HepG2 (cell line): ENCODE measurements at regions of chr16 and their contacts with region 1.

Region 1: DNA sequence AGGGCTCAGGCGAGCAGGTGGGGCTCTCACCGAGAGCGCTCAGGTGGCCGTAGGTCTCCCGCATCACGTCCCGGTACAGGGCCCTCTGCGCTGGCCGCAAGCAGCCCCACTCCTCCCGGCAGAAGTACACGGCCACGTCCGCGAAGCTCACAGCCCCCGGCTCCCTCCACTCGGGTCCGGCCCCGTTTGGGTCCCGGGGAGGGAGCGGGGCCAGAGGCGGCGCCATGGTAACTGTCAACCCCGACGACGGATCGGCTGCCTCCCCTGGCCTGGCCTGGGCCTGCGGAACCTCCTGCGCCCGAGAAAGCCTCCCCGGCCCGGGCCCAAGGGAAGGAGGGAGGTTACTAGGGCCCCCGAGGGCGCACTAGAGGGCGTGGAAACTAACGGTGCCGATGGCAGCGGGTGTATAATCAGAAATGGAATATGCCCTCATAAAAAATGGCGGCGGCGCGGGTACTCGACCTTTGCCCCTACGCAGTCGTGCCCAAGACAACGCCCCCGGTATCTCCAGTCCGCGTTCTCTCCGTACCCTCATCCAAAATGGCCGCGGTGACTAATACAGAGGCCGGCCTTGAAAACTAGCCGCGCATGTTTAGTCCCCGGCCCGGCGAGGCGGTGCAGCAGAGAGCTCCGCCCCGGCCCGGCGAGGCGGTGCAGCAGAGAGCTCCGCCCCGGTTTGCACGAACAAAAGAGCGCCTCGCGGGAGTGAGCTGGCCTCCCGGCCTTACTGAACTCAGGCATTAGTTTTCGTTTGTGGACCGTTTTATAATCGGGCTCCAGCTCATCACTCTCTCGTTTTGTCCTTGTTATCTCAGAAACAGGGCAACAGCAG is at the start of gene ZNF764:
- DNase-seq: peak; percentile 99
- ATAC-seq: peak; percentile 95
- H3K4me3 ChIP-seq: peak within 1 kb of the TSS; percentile 73 to 82 (median 82)
- H3K27ac ChIP-seq: peak within 1 kb of the TSS; percentile 95
- H3K4me1 ChIP-seq: peaks cover 40% of the 10 kb centered on the region
- H3K27me3 ChIP-seq: no peaks in the 10 kb centered on the region
- CTCF ChIP-seq: no peak; the same call in none of the 2 replicates
- EP300 ChIP-seq: peak in 1 of 2 experiments; percentile 38; a peak in 2 of 4 replicates
- POLR2A ChIP-seq: peak; percentile 80 to 90
- RAD21 ChIP-seq: peak; percentile 47
- total RNA-seq, gene ZNF764: 7.3 and 9.1 TPM in 2 replicates

Region 2: DNA sequence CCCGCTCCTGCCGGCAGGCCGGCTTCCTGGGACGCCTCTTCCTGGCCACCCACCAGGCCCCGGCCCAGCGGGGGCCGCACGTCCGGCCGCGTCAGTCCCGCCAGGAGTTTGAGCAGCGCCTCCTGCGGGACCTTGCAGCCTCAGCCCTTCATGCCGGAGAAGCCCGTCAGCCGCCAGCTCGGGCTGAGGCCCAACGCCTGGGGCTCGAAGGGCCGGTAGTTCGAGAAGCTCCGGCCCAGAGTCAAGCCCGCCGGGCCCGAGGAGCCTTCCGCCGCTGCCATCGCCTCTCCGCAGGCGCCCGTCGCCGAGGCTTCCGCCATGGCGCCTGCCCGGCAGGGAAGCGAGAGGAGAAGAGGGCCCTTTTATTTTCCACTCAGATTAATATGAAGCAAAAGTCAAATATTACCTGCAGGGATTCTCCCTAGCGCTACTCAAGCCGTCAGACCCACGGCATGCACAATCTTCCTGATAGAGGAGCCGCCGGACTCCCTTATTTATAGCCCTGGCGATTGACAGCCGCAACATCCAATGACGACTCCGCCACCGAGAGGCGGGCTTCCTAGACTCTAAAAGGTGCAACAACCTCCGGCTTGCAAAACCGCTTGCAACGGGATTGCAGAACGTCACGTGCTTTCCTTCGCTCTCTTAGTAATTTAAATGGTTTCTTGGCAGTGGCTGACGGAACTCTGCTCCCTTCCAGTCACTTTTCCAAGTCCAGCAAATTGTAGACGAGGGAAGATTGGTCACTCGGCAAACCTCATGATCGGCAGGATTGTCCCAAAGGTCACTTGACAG is 112.6 kb before region 1 on chr16 and contains the start of gene SEPHS2:
- CTCF ChIA-PET with region 1: no interaction called
- POLR2A ChIA-PET with region 1: interaction called, 10 read pairs
- in situ Hi-C with region 1: no loop called
- intact Hi-C with region 1: no loop called
- DNase-seq: peak; percentile 97
- ATAC-seq: peak; percentile 52
- H3K4me3 ChIP-seq: peak within 1 kb of the TSS; percentile 86 to 92 (median 91)
- H3K27ac ChIP-seq: peak within 1 kb of the TSS; percentile 95
- H3K4me1 ChIP-seq: peaks cover 94% of the 10 kb centered on the region
- H3K27me3 ChIP-seq: no peaks in the 10 kb centered on the region; a peak in 1 of 5 replicates
- CTCF ChIP-seq: peak; percentile 55
- EP300 ChIP-seq: peak in 1 of 2 experiments; percentile 41; a peak in 1 of 4 replicates
- POLR2A ChIP-seq: peak; percentile 92 to 100
- RAD21 ChIP-seq: peak; percentile 46
- total RNA-seq, gene SEPHS2: 20.7 and 56.3 TPM in 2 replicates

Region 3: DNA sequence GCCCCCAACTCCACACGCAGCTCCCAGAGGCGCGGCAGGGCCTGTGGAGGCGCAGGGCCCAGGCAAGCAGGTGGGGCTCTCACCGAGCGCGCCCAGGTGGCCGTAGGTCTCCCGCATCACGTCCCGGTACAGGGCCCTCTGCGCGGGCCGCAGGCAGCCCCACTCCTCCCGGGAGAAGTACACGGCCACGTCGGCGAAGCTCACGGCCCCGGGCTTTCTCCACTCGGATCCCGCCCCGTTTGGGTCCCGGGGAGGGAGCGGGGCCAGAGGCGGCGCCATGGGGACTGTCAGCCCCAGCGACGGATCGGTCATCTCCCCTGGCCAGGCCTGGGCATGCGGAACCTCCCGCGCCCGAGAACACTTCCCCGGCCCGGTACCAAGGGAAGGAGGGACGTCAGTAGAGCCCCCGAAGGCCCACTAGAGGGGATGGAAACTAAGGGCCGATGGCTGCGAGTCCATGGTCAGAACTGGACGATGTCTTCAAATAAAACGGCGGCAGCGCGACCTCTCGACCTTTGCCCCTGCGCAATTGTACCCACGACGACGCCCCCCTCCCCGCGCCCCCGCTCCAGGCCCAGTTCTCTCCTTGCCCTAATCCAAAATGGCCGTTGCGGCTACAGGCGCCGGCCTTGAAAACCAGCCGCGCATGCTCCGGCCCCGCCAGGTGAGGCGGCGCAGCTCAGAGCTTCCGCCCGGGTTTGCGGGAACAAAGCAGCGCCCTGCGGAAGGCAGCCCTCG is 23.6 kb before region 1 on chr16 and contains the start of gene ZNF747:
- CTCF ChIA-PET with region 1: interaction called, 3 read pairs
- POLR2A ChIA-PET with region 1: interaction called, 187 read pairs
- in situ Hi-C with region 1: no loop called
- intact Hi-C with region 1: loop called (anchors 2 kb)
- DNase-seq: peak; percentile 92
- ATAC-seq: peak; percentile 84
- H3K4me3 ChIP-seq: peak within 1 kb of the TSS; percentile 75 to 93 (median 81)
- H3K27ac ChIP-seq: peak within 1 kb of the TSS; percentile 85
- H3K4me1 ChIP-seq: peaks cover 68% of the 10 kb centered on the region
- H3K27me3 ChIP-seq: no peaks in the 10 kb centered on the region; a peak in 1 of 5 replicates
- CTCF ChIP-seq: peak; percentile 47
- EP300 ChIP-seq: peak; percentile 22 to 47; a peak in 2 of 4 replicates
- POLR2A ChIP-seq: peak; percentile 72 to 87
- RAD21 ChIP-seq: no peak; the same call in none of the 2 replicates
- total RNA-seq, gene ZNF747: 8.8 and 10.2 TPM in 2 replicates

Region 4: GRCh38 chr16:30571695-30572600 is 13.8 kb after region 1 on chr16 and contains the start of gene ZNF688:
- CTCF ChIA-PET with region 1: no interaction called
- POLR2A ChIA-PET with region 1: interaction called, 73 read pairs
- in situ Hi-C with region 1: no loop called
- intact Hi-C with region 1: loop called (anchors 1 kb)
- DNase-seq: peak; percentile 93
- ATAC-seq: peak; percentile 89
- H3K4me3 ChIP-seq: peak within 1 kb of the TSS; percentile 89 to 97 (median 93)
- H3K27ac ChIP-seq: peak within 1 kb of the TSS; percentile 89
- H3K4me1 ChIP-seq: peaks cover 71% of the 10 kb centered on the region
- H3K27me3 ChIP-seq: no peaks in the 10 kb centered on the region
- CTCF ChIP-seq: no peak
- EP300 ChIP-seq: no peak
- POLR2A ChIP-seq: peak; percentile 52 to 74
- RAD21 ChIP-seq: no peak; the same call in 1 of the 2 replicates
- total RNA-seq, gene ZNF688: 5.4 and 5.8 TPM in 2 replicates

Region 5: GRCh38 chr16:30609926-30610839 is 52.0 kb after region 1 on chr16 and contains the start of gene ZNF689:
- CTCF ChIA-PET with region 1: no interaction called
- POLR2A ChIA-PET with region 1: interaction called, 28 read pairs
- in situ Hi-C with region 1: no loop called
- intact Hi-C with region 1: no loop called
- DNase-seq: peak; percentile 98
- ATAC-seq: peak; percentile 92
- H3K4me3 ChIP-seq: peak within 1 kb of the TSS; percentile 80 to 96 (median 92)
- H3K27ac ChIP-seq: peak within 1 kb of the TSS; percentile 92
- H3K4me1 ChIP-seq: peaks cover 37% of the 10 kb centered on the region
- H3K27me3 ChIP-seq: no peaks in the 10 kb centered on the region; a peak in 1 of 5 replicates
- CTCF ChIP-seq: peak; percentile 21; the same call in 1 of the 2 replicates
- EP300 ChIP-seq: peak; percentile 26 to 33; a peak in 1 of 4 replicates
- POLR2A ChIP-seq: peak; percentile 84 to 96
- RAD21 ChIP-seq: no peak; the same call in 1 of the 2 replicates
- total RNA-seq, gene ZNF689: 19.5 and 22.7 TPM in 2 replicates